ENCODE measurements at regions of chr19 and their contacts with region 1.

Region 1: DNA sequence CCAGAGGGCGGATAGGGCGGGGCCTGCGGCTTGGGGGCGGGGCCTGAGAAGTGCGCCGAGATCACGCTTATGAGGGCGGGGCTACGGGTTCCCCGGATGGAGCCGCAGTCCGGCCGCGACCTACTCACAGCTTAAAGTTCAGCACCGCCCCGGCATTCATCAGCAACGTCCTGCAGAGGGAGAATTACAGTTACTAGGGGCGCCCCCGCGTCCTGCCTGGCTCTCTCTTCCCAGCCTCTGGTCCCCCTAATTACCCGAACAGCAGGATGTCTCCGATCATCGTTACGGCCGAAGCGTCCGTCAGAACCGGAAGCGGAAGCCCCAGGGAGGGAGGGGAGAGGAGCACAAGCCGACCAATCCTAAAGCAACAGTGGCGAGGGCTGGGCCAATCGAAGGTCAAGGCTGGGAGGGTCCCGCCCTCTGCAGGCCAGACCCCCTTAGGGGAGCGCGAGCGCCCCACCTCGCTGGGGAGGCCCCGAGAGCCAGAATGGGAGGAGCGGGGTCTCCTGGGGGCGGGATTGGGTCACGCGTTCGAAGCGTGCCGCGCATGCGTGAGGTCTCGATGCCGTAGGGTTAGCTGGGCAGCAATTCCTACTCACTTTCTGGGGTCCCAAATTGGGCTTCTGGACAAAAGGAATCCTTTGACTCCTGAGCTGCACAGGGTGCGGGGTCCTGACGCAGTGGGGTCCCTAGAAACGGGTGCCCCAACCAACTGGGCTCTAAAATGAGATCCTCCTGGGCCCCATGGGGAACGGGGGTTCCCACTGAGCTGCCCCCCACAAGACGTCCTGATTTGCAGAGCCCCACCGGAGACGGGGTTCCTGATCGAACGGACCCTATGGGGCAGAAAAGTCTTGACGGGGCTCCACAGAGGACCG is at the start of gene SMIM7:
- DNase-seq: peak; percentile 99
- ATAC-seq: peak; percentile 99
- H3K4me3 Mint-ChIP-seq: peak within 1 kb of the TSS; percentile 99
- H3K27ac Mint-ChIP-seq: peak within 1 kb of the TSS; percentile 94
- H3K4me1 Mint-ChIP-seq: peaks cover 34% of the 10 kb centered on the region
- H3K27me3 Mint-ChIP-seq: peaks cover 4% of the 10 kb centered on the region
- total RNA-seq, gene SMIM7: 46.5 to 52.2 TPM

Region 2: GRCh38 chr19:16197622-16198369 is 462.3 kb before region 1 on chr19 and contains the start of gene AP1M1:
- CTCF ChIA-PET with region 1: no interaction called
- POLR2A ChIA-PET with region 1: no interaction called
- intact Hi-C with region 1: loop called in 1 of 2 experiments (anchors 1 kb)
- DNase-seq: peak; percentile 99
- ATAC-seq: peak; percentile 95
- H3K4me3 Mint-ChIP-seq: peak within 1 kb of the TSS; percentile 83
- H3K27ac Mint-ChIP-seq: peak within 1 kb of the TSS; percentile 96
- H3K4me1 Mint-ChIP-seq: peaks cover 33% of the 10 kb centered on the region
- H3K27me3 Mint-ChIP-seq: no peaks in the 10 kb centered on the region
- total RNA-seq, gene AP1M1: 61.8 to 92.0 TPM

Region 3: DNA sequence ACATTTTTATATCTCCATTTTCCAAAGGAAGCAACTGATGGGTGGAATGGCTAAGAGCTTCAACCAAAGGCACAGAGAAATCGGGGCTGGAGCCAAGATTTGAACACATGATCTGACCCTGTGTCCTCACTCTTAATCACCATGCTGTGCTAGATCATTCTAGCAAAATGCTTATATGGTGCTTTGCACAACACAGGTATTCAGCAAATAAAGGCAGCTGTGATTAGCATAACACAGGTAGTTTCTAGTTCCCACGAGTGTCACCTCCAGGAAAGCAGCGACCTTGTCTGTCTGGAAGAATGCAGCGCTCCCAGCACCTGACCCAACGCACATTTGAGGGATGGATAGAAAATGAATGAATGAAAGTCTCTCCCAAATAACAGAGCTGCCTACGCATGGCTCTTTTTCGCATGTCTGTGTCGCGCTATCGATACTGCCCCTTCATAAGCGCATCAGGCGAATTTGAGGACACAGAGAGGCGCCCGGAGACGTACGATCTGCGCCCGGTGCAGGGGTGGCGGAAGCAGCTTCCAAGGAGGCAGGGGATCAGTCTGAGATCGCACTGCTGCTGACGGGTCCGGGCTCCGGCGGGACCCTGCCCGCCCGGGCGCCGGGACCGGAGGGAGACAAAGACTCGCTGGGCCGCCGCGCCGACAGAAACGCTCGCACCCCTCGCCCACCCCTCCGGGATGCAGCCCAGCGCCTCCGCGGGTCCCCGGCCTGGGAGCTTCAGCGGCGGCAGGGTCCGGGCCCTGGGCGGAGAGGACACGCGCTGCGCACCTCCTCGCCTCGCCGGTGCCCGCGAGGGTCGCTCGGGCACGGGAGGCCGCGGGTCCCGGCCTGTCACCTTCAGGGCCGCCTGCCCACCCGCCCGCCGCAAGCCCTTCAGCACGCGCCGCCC is 188.9 kb before region 1 on chr19:
- CTCF ChIA-PET with region 1: no interaction called
- POLR2A ChIA-PET with region 1: no interaction called
- intact Hi-C with region 1: loop called in 1 of 2 experiments (anchors 1 kb)
- DNase-seq: peak; percentile 60
- ATAC-seq: peak; percentile 20
- H3K4me3 Mint-ChIP-seq: peak overlapping the region; percentile 85
- H3K27ac Mint-ChIP-seq: peak overlapping the region; percentile 72
- H3K4me1 Mint-ChIP-seq: peaks cover 37% of the 10 kb centered on the region
- H3K27me3 Mint-ChIP-seq: peaks cover 2% of the 10 kb centered on the region

Region 4: GRCh38 chr19:16528073-16528472 is 132.0 kb before region 1 on chr19:
- CTCF ChIA-PET with region 1: no interaction called
- POLR2A ChIA-PET with region 1: no interaction called
- intact Hi-C with region 1: no loop called
- DNase-seq: peak; percentile 72
- ATAC-seq: peak; percentile 77
- H3K4me3 Mint-ChIP-seq: no peak overlapping the region
- H3K27ac Mint-ChIP-seq: no peak overlapping the region
- H3K4me1 Mint-ChIP-seq: no peaks in the 10 kb centered on the region
- H3K27me3 Mint-ChIP-seq: no peaks in the 10 kb centered on the region

Region 5: DNA sequence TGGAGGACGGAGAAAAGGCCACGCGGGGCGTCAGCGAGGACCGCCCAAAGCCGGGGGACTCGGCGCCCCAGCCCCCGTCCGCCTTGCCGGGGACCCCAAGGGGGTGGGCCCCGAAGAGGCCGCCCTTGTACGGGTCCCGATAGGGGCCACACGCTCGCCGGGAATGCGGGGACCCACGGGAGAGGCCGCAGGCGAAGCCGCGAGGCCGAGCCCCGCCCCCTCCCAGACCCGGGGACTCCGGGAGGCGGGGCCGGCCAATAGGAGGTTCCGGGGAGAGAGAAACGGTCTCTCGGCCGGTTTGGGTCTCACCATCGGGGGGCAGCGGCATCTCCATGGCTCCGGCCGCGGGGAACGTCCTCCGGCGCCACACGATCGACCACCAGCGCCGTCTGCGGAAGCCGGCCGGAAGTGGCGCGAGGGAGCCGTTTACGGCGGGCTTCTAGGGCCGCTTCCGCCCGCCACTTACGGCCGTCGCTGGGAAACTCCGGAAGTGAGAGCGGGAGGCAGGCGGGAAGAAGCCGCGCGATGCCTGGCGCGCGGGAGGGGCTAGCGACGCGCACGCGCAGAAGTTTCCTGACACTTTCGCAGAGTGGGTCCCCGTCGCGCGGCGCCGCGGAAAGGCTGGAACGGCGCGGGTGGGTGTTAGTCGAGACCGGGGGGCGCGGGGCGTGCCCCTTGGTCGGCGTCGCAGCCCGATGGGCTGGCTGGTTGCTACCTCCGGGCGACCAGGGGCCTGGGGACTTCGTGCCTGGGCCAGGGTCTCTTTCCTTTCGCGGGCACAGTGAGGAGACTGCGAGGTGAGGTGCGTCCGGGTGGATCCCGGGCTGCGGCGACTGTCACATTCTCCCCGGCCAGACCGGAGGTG is 117.8 kb before region 1 on chr19 and contains the start of gene CHERP:
- CTCF ChIA-PET with region 1: no interaction called
- POLR2A ChIA-PET with region 1: no interaction called
- intact Hi-C with region 1: loop called (anchors 1 kb)
- DNase-seq: peak; percentile 97
- ATAC-seq: peak; percentile 85
- H3K4me3 Mint-ChIP-seq: peak within 1 kb of the TSS; percentile 98
- H3K27ac Mint-ChIP-seq: peak within 1 kb of the TSS; percentile 94
- H3K4me1 Mint-ChIP-seq: peaks cover 63% of the 10 kb centered on the region
- H3K27me3 Mint-ChIP-seq: no peaks in the 10 kb centered on the region
- total RNA-seq, gene CHERP: 57.9 to 64.8 TPM

Region 6: GRCh38 chr19:16584248-16585141 is 75.6 kb before region 1 on chr19:
- CTCF ChIA-PET with region 1: interaction called, 3 read pairs
- POLR2A ChIA-PET with region 1: interaction called, 6 read pairs
- intact Hi-C with region 1: loop called (anchors 1 to 5 kb)
- DNase-seq: peak; percentile 94
- ATAC-seq: peak; percentile 79
- H3K4me3 Mint-ChIP-seq: peak overlapping the region; percentile 79
- H3K27ac Mint-ChIP-seq: peak overlapping the region; percentile 95
- H3K4me1 Mint-ChIP-seq: peaks cover 76% of the 10 kb centered on the region
- H3K27me3 Mint-ChIP-seq: no peaks in the 10 kb centered on the region

Region 7: GRCh38 chr19:16714702-16715287 is 54.7 kb after region 1 on chr19:
- CTCF ChIA-PET with region 1: no interaction called
- POLR2A ChIA-PET with region 1: no interaction called
- intact Hi-C with region 1: no loop called
- DNase-seq: peak; percentile 75
- ATAC-seq: peak; percentile 47
- H3K4me3 Mint-ChIP-seq: no peak overlapping the region
- H3K27ac Mint-ChIP-seq: no peak overlapping the region
- H3K4me1 Mint-ChIP-seq: no peaks in the 10 kb centered on the region
- H3K27me3 Mint-ChIP-seq: peaks cover 2% of the 10 kb centered on the region

Region 8: GRCh38 chr19:16829010-16829821 is 169.1 kb after region 1 on chr19 and contains the start of gene SIN3B:
- CTCF ChIA-PET with region 1: no interaction called
- POLR2A ChIA-PET with region 1: no interaction called
- intact Hi-C with region 1: loop called in 1 of 2 experiments (anchors 1 kb)
- DNase-seq: peak; percentile 93
- ATAC-seq: peak; percentile 91
- H3K4me3 Mint-ChIP-seq: peak within 1 kb of the TSS; percentile 79
- H3K27ac Mint-ChIP-seq: peak within 1 kb of the TSS; percentile 82
- H3K4me1 Mint-ChIP-seq: peaks cover 38% of the 10 kb centered on the region
- H3K27me3 Mint-ChIP-seq: peaks cover 20% of the 10 kb centered on the region
- total RNA-seq, gene SIN3B: 27.6 to 28.5 TPM

Measured in activated CD4-positive, alpha-beta T cell treated with anti-CD3 and anti-CD28 coated beads for 36 hours (primary cell).